Endothelial cell of umbilical vein (primary cell): ENCODE measurements at regions of chr7 and their contacts with region 1.

Region 1: DNA sequence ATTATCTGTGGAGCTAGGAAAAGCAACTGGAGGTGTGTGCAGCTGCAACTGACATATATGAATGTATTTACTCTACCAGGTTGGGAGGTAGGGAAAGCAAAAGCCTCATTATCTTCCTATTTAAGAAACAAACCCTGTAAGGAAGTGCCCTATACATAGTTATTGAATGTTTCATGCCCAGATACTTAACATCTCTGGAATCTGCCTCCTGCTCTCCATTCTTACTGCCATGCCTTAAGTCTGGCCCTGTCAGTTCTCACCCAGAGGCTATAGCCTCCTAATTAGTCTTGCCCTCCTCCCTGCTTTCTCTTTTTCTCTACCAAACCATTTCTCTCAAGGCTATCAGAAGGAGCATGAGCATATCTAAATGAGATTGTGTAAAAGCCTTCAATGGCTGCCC is 542.6 kb upstream of the LRRN3 start:
- DNase-seq: no peak
- H3K4me3 ChIP-seq: no peak overlapping the region
- H3K27ac ChIP-seq: no peak overlapping the region
- H3K4me1 ChIP-seq: no peaks in the 10 kb centered on the region
- H3K27me3 ChIP-seq: no peaks in the 10 kb centered on the region
- CTCF ChIP-seq: no peak
- POLR2A ChIP-seq: no peak

Region 2: DNA sequence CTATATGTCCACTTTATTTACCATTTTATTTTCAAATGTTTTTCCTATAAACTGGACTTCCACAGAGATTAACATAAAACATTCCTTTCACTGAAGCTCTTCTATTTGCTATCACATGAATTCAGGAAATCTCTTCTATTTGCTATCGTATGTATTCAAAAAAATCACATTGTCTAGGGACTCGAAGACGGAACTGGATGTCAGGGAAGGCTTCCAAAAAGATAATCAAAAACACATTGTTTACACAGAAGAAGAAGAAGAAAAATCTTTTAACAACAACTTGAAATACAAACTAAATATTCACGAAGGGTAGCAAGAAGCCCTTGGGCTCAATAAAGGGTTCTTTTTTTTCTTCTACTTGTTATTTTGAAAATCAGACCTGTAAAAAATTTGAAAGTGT is 116.4 kb after region 1 on chr7:
- CTCF ChIA-PET with region 1: no interaction called
- POLR2A ChIA-PET with region 1: no interaction called
- dilution Hi-C with region 1: no loop called
- intact Hi-C with region 1: no loop called
- DNase-seq: no peak
- H3K4me3 ChIP-seq: no peak overlapping the region
- H3K27ac ChIP-seq: no peak overlapping the region
- H3K4me1 ChIP-seq: no peaks in the 10 kb centered on the region
- H3K27me3 ChIP-seq: no peaks in the 10 kb centered on the region
- CTCF ChIP-seq: no peak
- POLR2A ChIP-seq: no peak

Region 3: DNA sequence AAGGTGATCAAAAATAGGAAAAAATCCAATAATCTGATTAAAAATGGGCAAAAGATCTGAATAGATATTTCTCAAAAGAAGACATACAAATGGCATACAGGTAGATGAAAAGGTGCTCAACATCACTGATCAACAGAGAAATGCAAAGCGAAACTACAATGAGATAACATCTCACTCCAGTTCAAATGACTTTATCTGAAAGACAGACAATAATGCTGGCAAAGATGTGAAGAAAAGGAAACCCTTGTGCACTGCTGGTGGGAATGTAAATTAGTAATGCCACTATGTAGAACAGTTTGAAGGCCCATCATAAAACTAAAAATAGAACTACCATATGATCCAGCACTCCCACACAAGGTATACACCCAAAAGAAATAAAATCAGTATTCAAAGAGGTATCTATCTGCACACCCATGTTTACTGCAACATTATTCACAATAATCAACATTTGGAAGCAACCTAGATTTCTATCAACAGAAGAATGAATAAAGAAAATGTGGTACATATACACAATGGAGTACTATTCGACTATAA is 627.6 kb after region 1 on chr7:
- CTCF ChIA-PET with region 1: no interaction called
- POLR2A ChIA-PET with region 1: no interaction called
- dilution Hi-C with region 1: no loop called
- intact Hi-C with region 1: loop called (anchors 5 kb)
- DNase-seq: no peak
- H3K4me3 ChIP-seq: no peak overlapping the region
- H3K27ac ChIP-seq: no peak overlapping the region
- H3K4me1 ChIP-seq: no peaks in the 10 kb centered on the region
- H3K27me3 ChIP-seq: no peaks in the 10 kb centered on the region
- CTCF ChIP-seq: no peak
- POLR2A ChIP-seq: no peak

Region 4: GRCh38 chr7:111266613-111267012 is 718.2 kb after region 1 on chr7:
- CTCF ChIA-PET with region 1: no interaction called
- POLR2A ChIA-PET with region 1: no interaction called
- dilution Hi-C with region 1: no loop called
- intact Hi-C with region 1: no loop called
- DNase-seq: no peak
- H3K4me3 ChIP-seq: no peak overlapping the region
- H3K27ac ChIP-seq: no peak overlapping the region
- H3K4me1 ChIP-seq: no peaks in the 10 kb centered on the region
- H3K27me3 ChIP-seq: no peaks in the 10 kb centered on the region
- CTCF ChIP-seq: no peak
- POLR2A ChIP-seq: no peak